GM23248 (cell line): ENCODE measurements at regions of chr7 and their contacts with region 1.

Region 1: DNA sequence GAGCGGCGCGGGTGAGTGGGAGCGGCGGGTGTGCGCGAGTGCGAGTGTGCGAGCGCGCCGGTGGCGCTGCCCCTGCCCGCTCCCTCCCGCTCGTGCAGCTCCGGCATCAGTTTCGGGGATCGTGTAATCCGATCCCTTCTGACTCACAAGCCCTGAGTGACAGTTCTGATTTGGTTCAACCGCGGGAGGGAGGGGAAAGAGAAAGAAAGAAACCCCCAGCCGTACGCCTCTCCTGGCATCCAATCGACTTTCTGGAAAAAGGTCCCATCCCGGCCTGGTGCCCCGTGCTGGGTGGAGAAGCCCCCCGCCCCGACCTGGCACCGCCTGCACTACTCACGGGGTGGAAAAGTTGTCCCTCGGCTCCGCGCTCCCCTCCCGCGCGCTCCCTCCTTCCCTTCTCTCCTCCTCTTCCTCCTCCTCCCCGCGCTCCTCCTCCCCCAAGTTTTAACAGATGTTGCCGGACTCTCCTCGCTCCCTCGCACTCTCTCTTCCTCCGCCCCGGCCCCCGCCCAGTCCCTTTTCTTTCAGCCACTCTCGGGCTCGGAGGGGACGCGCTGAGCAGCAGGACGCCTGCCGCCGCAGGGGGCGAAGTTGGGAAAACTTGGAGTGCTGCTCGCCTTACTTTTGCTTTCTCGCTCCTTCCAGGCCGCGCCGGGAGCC is at the start of gene GLI3:
- DNase-seq: peak; percentile 93
- H3K4me3 ChIP-seq: peak within 1 kb of the TSS; percentile 90
- H3K27ac ChIP-seq: peak within 1 kb of the TSS; percentile 93
- H3K4me1 ChIP-seq: peaks cover 50% of the 10 kb centered on the region
- H3K27me3 ChIP-seq: no peaks in the 10 kb centered on the region
- total RNA-seq, gene GLI3: 2.0 and 4.0 TPM in 2 replicates

Region 2: GRCh38 chr7:42843205-42843800 is 606.0 kb after region 1 on chr7:
- in situ Hi-C with region 1: loop called (anchors 25 kb)
- DNase-seq: peak; percentile 76
- H3K4me3 ChIP-seq: peak overlapping the region; percentile 67
- H3K27ac ChIP-seq: no peak overlapping the region
- H3K4me1 ChIP-seq: peaks cover 8% of the 10 kb centered on the region; the same call in 1 of the 2 replicates
- H3K27me3 ChIP-seq: no peaks in the 10 kb centered on the region; the same call in 1 of the 2 replicates